ENCODE measurements at regions of chr11 and their contacts with region 1.

Region 1: GRCh38 chr11:48097041-48097476 is 116.7 kb downstream of the PTPRJ start:
- DNase-seq: no peak
- H3K4me3 Mint-ChIP-seq: peak overlapping the region; percentile 62
- H3K27ac Mint-ChIP-seq: peak overlapping the region; percentile 93
- H3K4me1 Mint-ChIP-seq: peaks cover 59% of the 10 kb centered on the region
- H3K27me3 Mint-ChIP-seq: no peaks in the 10 kb centered on the region

Region 2: DNA sequence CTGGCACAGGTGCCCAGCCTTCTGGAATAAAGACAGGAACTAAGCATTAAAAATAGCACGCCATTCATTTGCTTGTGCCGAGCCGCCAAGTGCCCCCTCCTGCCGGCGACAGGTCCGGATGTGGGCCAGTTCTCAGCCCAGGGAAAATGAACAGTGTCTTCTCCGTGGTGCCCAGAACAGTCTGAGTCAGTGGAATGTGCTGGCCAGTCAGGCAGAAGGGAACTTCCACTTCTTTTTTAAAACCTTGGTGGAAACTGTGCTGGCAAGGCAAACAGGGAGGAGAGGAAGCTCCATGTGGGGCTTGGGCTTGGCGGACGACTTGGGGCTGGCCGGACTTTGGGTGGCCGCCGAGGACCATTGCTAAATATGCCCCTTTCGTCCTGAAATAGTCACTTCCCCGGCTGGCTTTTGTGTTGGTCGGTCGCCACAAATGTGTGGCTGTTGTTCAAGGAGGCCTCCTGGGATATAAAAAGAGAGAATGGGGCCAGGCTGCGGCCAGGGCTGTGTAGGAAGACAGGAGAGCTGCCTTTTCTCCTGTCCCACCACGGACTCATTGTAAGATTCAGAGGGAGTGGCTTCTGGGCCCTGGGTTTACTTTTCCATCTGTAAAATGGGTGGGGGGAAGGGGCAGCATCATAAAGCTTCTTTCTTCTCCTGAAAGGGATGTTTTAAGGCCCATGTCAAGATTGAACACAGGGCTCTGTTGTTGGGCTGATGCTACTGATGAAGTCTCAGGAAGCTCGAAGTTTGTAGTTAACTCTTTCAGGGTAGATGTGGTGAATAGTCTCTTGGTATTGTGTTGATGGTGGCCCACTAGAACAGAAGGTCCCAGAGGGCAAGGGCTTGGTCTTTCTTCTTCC is 15.7 kb before region 1 on chr11:
- intact Hi-C with region 1: loop called (anchors 2 kb)
- DNase-seq: peak; percentile 76
- H3K4me3 Mint-ChIP-seq: peak overlapping the region; percentile 59
- H3K27ac Mint-ChIP-seq: peak overlapping the region; percentile 86
- H3K4me1 Mint-ChIP-seq: peaks cover 51% of the 10 kb centered on the region
- H3K27me3 Mint-ChIP-seq: no peaks in the 10 kb centered on the region